Cardiac septum (tissue), 1 donor: ENCODE measurements at regions of chr11 and their contacts with region 1.

Region 1: GRCh38 chr11:12087075-12088004 is 23.1 kb upstream of the MICAL2 start:
- DNase-seq: no peak

Region 2: DNA sequence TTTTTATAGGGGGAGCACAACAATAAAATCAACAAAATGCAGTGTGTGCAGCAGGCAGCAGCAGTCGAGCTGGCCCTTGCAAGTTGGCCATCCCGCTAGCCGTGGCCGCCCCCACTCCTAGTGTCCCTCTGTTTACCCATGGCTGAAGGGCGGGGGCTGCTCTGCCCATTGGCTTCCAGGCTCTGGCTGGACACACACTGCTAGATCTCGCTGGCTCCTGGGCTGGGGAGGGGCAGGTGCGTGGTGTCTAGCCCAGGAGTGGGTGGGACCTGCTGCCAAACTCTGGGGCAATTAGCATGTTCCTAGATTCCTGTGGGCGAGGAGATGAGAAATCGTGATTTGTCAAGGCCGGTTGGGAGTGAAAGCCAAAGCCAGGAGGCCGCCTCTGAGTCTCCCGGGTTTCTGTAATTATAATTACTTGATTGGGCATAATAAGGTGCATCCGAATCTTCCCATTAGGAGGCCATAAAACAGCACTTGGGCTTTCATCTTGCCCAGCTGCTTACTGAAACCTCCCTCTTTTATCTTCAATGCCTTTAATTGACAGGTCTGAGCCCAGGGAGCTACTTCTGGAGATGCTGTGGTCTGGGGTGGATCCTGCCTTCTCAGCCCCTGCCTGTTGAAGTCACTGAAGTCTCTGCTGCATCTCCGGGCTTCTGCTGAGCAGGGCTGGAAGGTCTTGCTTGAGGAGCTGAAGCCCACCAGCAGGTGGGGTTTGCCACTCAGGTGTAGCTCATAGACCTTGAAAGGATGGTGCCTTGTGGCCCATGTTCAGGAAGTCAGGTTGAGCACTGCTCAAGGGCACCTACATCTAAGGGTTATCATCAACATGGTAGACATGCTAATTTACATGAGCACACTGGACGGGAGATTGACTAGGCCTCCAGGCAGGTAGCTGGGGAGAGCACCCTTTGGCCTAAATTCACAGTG is 34.4 kb before region 1 on chr11:
- intact Hi-C with region 1: loop called (anchors 5 kb)
- DNase-seq: no peak

Region 3: GRCh38 chr11:12159351-12160099 is 72.2 kb after region 1 on chr11:
- intact Hi-C with region 1: loop called (anchors 5 kb)
- DNase-seq: no peak

Region 4: DNA sequence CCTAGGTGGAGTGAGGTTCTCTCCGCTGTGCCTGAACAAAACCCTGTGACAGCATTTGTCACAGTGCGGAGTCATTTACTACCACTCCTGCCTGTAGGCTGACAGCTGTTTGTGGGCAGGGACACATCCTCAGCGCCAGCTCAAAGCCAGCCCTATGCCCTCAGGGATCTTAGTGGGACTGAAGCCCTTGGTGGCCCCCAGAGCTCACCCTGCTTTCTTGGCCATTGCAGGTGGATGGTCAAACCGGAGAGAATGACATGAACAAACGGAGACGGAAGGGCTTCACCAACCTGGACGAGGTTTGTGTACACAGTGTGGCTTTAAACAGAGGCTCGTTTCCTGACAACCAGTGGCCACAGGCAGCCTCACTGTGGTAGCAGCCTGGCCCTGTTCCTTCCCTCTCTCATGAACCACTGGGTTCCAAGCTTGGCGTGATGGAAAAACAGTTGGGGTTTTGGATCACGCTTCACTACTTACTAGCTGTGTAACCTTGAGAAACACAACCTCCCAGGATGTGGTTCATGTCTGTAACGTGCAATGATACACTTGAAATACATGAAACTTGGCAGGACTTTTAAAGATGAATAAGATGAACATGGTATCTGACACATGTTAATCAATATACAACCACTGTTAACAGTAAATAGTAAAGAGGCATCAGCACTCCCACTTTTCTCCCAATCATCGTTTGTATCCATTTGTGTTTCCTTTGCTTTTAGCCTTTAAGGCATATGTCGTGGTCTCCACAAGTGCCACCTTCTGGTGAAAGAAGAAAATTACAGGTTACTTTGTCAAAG is 148.8 kb after region 1 on chr11:
- intact Hi-C with region 1: loop called (anchors 2 kb)
- DNase-seq: no peak

Region 5: DNA sequence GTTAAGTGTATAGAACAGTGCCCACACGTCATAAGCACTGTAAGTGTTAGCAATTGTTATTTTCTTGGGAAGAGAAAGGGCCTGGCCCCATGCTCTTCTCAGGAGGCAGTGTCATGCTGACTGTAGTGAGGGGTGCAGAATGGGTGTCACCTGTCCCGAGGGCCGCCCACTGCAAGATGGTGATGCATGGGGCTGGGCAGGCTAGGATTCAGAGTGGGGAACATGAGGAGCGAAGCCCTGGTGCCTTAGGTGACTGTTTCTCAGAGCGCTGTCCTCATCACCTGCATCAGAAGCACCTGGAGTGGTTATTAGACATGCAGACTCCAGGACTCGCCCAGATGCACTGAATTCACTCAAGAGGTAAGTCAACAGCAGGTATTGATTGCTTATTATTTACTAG is 189.0 kb after region 1 on chr11:
- intact Hi-C with region 1: loop called (anchors 2 kb)
- DNase-seq: peak; percentile 62